GM12878 (cell line): ENCODE measurements at regions of chr12 and their contacts with region 1.

Region 1: GRCh38 chr12:104462931-104463339 is 6.2 kb downstream of the CHST11 start:
- DNase-seq: peak; percentile 88
- ATAC-seq: peak; percentile 52
- H3K4me3 ChIP-seq: peak overlapping the region; percentile 53
- H3K27ac ChIP-seq: peak overlapping the region; percentile 80
- H3K4me1 ChIP-seq: peaks cover 50% of the 10 kb centered on the region
- H3K27me3 ChIP-seq: no peaks in the 10 kb centered on the region
- CTCF ChIP-seq: no peak
- EP300 ChIP-seq: peak; percentile 25 to 85; a peak in 3 of 4 replicates
- POLR2A ChIP-seq: no peak
- RAD21 ChIP-seq: no peak

Region 2: GRCh38 chr12:104339663-104340062 is 123.3 kb before region 1 on chr12:
- CTCF ChIA-PET with region 1: no interaction called
- POLR2A ChIA-PET with region 1: no interaction called
- RAD21 ChIA-PET with region 1: no interaction called
- SMC1A ChIA-PET with region 1: no interaction called
- in situ Hi-C with region 1: no loop called
- intact Hi-C with region 1: no loop called
- DNase-seq: no peak
- ATAC-seq: no peak
- H3K4me3 ChIP-seq: no peak overlapping the region
- H3K27ac ChIP-seq: no peak overlapping the region
- H3K4me1 ChIP-seq: no peaks in the 10 kb centered on the region
- H3K27me3 ChIP-seq: no peaks in the 10 kb centered on the region
- CTCF ChIP-seq: no peak
- EP300 ChIP-seq: no peak
- POLR2A ChIP-seq: no peak
- RAD21 ChIP-seq: no peak

Region 3: DNA sequence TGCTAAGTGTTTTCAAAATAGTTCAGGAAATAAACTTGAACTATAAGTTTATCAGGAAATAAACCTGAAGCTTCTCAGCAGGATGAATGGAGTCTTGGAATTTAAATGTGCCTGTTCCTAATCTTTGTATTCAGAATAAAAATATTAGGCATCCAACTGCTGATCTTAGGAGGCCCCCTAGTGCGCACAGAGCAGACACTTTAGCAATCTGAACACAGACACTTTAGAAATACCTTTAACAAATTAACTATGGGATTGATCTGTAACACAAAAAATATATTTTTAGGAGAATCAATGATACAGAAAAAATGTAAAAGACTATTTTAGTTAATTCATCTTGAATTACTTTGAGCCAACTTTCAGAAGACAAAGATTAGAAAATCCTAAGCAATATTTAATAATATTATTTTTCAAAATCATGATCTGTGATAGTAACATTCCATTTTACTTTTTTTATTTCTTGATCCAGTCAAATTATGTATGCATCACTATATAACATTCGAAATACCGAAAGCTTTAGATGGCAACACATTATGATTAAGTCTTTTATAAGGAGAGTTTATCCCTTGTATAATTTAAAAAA is 414.3 kb after region 1 on chr12:
- CTCF ChIA-PET with region 1: interaction called, 3 read pairs
- POLR2A ChIA-PET with region 1: no interaction called
- RAD21 ChIA-PET with region 1: no interaction called
- SMC1A ChIA-PET with region 1: no interaction called
- in situ Hi-C with region 1: no loop called
- intact Hi-C with region 1: loop called (anchors 10 kb)
- DNase-seq: no peak
- ATAC-seq: peak; percentile 62
- H3K4me3 ChIP-seq: no peak overlapping the region
- H3K27ac ChIP-seq: no peak overlapping the region
- H3K4me1 ChIP-seq: no peaks in the 10 kb centered on the region
- H3K27me3 ChIP-seq: no peaks in the 10 kb centered on the region
- CTCF ChIP-seq: peak; percentile 42 to 64 (median 46); a peak in 5 of 6 replicates
- EP300 ChIP-seq: no peak
- POLR2A ChIP-seq: no peak
- RAD21 ChIP-seq: peak; percentile 87